IMR-90 (cell line): ENCODE measurements at regions of chr14 and their contacts with region 1.

Region 1: GRCh38 chr14:61837336-61838229 is 75.4 kb downstream of the SNAPC1 start:
- DNase-seq: peak; percentile 80
- ATAC-seq: peak; percentile 92
- H3K4me3 ChIP-seq: no peak overlapping the region
- H3K27ac ChIP-seq: no peak overlapping the region
- H3K4me1 ChIP-seq: no peaks in the 10 kb centered on the region; the same call in 1 of the 2 replicates
- H3K27me3 ChIP-seq: no peaks in the 10 kb centered on the region
- CTCF ChIP-seq: peak; percentile 95
- POLR2A ChIP-seq: 0 out of 2 replicates have a peak, but pooled peaks have one; percentile 39
- RAD21 ChIP-seq: peak; percentile 98

Region 2: DNA sequence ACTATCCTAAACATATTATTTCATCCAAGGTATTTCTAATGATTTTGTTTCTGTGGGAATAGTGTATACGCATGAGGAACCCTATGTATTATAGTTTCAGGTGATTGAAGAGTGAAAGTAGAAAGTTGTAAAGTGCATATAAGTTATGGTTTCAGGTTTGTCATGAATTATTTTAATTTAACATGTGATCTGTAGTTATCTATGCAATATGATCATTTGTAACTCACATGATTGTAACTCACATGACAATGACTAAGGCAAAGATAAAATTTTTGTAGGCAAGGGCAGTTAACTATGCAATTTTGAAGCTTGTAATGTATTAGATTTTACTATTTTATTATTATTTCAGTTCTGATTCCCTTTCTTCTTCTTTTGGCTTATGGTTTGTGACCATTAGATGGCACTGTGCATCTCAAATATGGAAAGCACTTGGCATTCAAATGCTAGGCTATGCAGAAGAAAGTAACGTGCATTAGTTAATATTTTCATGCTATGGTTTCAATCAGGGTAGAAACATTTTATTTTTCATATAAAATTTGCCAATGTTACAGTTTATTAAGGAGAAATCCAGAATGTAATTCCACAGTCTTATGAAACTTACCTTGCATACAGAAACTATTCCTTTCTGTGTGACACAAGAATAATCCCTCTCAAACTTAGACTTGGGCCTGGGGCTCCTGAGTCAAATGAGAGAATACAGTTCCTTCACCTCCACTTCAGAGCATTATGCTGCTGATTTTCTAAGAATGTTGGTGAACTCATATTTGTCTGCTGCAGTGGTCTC is 540.7 kb before region 1 on chr14:
- CTCF ChIA-PET with region 1: no interaction called
- POLR2A ChIA-PET with region 1: no interaction called
- dilution Hi-C with region 1: no loop called
- in situ Hi-C with region 1: loop called (anchors 5 kb)
- intact Hi-C with region 1: loop called (anchors 1 kb)
- DNase-seq: peak; percentile 56
- ATAC-seq: peak; percentile 87
- H3K4me3 ChIP-seq: no peak overlapping the region
- H3K27ac ChIP-seq: no peak overlapping the region
- H3K4me1 ChIP-seq: no peaks in the 10 kb centered on the region
- H3K27me3 ChIP-seq: peaks cover 17% of the 10 kb centered on the region
- CTCF ChIP-seq: peak; percentile 72
- POLR2A ChIP-seq: no peak
- RAD21 ChIP-seq: peak; percentile 54

Region 3: GRCh38 chr14:61461808-61462275 is 375.7 kb before region 1 on chr14:
- CTCF ChIA-PET with region 1: interaction called, 16 read pairs
- POLR2A ChIA-PET with region 1: no interaction called
- dilution Hi-C with region 1: no loop called
- in situ Hi-C with region 1: loop called (anchors 5 kb)
- intact Hi-C with region 1: loop called (anchors 1 kb)
- DNase-seq: peak; percentile 77
- ATAC-seq: peak; percentile 49
- H3K4me3 ChIP-seq: no peak overlapping the region
- H3K27ac ChIP-seq: peak overlapping the region; percentile 61; the same call in 1 of the 2 replicates
- H3K4me1 ChIP-seq: peaks cover 20% of the 10 kb centered on the region
- H3K27me3 ChIP-seq: no peaks in the 10 kb centered on the region
- CTCF ChIP-seq: peak; percentile 77
- POLR2A ChIP-seq: peak; percentile 39; the same call in 1 of the 2 replicates
- RAD21 ChIP-seq: peak; percentile 94

Region 4: DNA sequence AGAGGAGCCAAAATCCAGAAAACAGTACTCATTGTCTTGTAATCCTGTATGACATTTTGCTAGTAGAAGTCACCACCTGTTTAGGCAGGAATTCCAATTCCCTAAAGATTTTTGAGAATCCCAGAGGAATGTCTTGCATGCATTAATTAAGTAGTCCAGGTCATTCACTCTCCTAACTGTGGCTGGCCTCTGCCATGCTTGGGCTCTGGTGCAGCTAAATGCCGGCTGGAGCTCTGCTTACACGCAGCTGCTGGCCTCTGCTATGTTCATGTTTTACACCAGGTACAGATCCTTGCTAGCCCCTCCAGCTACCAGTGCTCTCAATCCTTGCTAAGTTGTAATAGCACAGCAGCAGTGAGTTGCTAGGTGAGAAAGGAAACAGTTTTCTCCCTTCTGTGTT is 158.6 kb before region 1 on chr14:
- CTCF ChIA-PET with region 1: no interaction called
- POLR2A ChIA-PET with region 1: no interaction called
- dilution Hi-C with region 1: no loop called
- in situ Hi-C with region 1: no loop called
- intact Hi-C with region 1: no loop called
- DNase-seq: no peak
- ATAC-seq: peak; percentile 54
- H3K4me3 ChIP-seq: no peak overlapping the region
- H3K27ac ChIP-seq: no peak overlapping the region
- H3K4me1 ChIP-seq: peaks cover 3% of the 10 kb centered on the region; the same call in 1 of the 2 replicates
- H3K27me3 ChIP-seq: no peaks in the 10 kb centered on the region
- CTCF ChIP-seq: no peak
- POLR2A ChIP-seq: no peak
- RAD21 ChIP-seq: no peak

Region 5: GRCh38 chr14:61694830-61695694 is 142.5 kb before region 1 on chr14 and contains the start of gene HIF1A:
- CTCF ChIA-PET with region 1: no interaction called
- POLR2A ChIA-PET with region 1: no interaction called
- dilution Hi-C with region 1: no loop called
- in situ Hi-C with region 1: no loop called
- intact Hi-C with region 1: loop called (anchors 5 kb)
- DNase-seq: peak; percentile 99
- ATAC-seq: peak; percentile 94
- H3K4me3 ChIP-seq: peak within 1 kb of the TSS; percentile 94
- H3K27ac ChIP-seq: peak within 1 kb of the TSS; percentile 90
- H3K4me1 ChIP-seq: no peaks in the 10 kb centered on the region; the same call in none of the 2 replicates
- H3K27me3 ChIP-seq: no peaks in the 10 kb centered on the region
- CTCF ChIP-seq: peak; percentile 30; the same call in 1 of the 2 replicates
- POLR2A ChIP-seq: peak; percentile 97
- RAD21 ChIP-seq: peak; percentile 48
- total RNA-seq, gene HIF1A: 301 and 493 TPM in 2 replicates

Region 6: DNA sequence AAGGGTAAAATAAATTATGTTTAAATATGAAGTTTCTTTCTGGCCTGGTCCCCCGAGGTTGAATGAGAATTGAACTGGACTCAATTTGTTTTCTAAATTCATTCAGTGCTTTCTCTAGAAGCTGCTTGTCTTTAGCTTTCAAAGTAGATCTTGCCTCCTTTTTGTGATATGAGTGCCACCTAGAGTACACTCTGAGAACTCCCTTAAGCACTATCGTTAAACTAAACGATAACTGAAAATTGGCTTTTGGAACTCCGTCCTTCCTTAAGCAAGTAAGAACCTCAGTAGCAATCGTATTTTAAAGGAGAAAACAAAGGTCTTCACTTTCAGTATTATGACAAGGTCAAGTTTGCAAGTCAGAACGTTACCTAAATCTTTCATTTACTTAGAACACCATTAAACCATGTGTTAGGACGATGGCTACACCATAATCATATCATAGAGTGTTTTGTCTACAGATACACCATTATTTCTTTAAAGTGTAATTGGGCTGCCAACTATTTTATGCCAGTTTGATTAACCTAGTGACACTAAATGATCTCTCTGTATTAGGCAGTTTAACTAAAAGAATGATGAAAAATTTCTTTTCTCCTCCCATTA is 289.4 kb after region 1 on chr14:
- CTCF ChIA-PET with region 1: no interaction called
- POLR2A ChIA-PET with region 1: no interaction called
- dilution Hi-C with region 1: no loop called
- in situ Hi-C with region 1: no loop called
- intact Hi-C with region 1: loop called (anchors 1 kb)
- DNase-seq: peak; percentile 72
- ATAC-seq: peak; percentile 95
- H3K4me3 ChIP-seq: no peak overlapping the region
- H3K27ac ChIP-seq: no peak overlapping the region
- H3K4me1 ChIP-seq: no peaks in the 10 kb centered on the region
- H3K27me3 ChIP-seq: peaks cover 1% of the 10 kb centered on the region; the same call in 1 of the 2 replicates
- CTCF ChIP-seq: peak; percentile 87
- POLR2A ChIP-seq: peak; percentile 33; the same call in 1 of the 2 replicates
- RAD21 ChIP-seq: peak; percentile 92